ENCODE measurements at regions of chrX and their contacts with region 1.

Region 1: DNA sequence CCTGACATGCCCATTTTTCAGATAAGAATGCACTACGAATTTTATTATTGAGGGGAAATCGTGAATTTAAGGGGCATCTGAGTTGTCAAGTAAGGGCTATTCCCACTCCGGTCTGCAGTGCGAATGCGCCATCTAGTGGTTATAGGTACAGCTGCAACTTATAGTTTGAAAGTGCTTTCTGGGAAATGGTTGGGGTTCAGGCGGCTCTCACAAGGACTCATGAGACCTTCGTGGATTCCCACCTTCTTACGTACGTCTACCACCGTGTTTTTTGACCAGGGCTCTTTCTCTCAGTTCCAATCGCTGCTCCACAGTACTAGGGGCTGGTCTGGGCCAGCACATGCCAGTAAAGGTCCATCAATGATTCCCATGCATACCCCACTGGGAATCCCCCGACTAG is 12.3 kb downstream of the MSL3 start:
- DNase-seq: no peak
- H3K4me3 ChIP-seq: no peak overlapping the region
- H3K27ac ChIP-seq: no peak overlapping the region
- H3K4me1 ChIP-seq: no peaks in the 10 kb centered on the region
- H3K27me3 ChIP-seq: no peaks in the 10 kb centered on the region
- CTCF ChIP-seq: peak; percentile 1 to 74 (median 66)
- EP300 ChIP-seq: no peak
- POLR2A ChIP-seq: no peak
- RAD21 ChIP-seq: peak; percentile 79 to 80

Region 2: DNA sequence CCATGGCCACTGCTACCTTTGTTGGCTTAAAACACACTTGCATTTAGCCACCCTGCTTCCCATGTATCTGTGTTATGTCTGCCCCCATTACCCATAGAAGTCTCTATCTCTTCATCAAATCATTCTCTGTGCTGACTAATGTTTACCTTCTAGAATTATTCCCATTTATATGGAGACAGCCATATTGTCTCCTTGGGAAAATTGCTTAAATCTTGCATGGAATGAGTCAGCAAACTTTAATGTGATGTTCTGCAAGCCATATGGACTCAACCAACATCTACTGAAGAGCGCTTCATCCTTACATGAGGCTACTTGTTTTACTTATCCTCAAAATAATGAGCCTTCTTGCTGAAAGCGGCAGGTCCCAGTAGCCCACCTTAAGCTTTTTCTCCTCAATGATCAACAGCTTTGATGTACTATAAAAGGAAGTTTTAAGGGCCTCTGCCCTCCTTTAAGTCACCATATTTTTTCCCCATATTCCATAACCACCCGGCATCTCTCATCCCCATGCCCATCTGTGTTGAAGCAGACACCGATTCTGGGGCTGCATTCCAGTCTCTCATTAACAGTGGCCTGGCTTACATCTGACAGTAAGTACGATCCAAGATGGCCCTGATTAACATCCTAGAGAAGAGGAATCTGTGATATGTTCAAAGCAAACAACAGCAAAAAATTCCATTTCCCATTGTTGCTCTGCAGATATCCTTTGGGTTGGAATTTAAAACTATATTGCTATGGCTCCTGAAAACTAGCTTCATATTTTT is 235.0 kb before region 1 on chrX:
- CTCF ChIA-PET with region 1: interaction called, 11 read pairs
- POLR2A ChIA-PET with region 1: no interaction called
- DNase-seq: no peak
- H3K4me3 ChIP-seq: no peak overlapping the region
- H3K27ac ChIP-seq: no peak overlapping the region
- H3K4me1 ChIP-seq: no peaks in the 10 kb centered on the region
- H3K27me3 ChIP-seq: no peaks in the 10 kb centered on the region; a peak in 3 of 7 replicates
- CTCF ChIP-seq: no peak
- EP300 ChIP-seq: no peak
- POLR2A ChIP-seq: no peak
- RAD21 ChIP-seq: no peak

Measured in H1 (cell line).